ENCODE measurements at regions of chr3 and their contacts with region 1.

Region 1: GRCh38 chr3:17639765-17640164 is 102.7 kb downstream of the TBC1D5 start:
- DNase-seq: peak; percentile 94
- ATAC-seq: peak; percentile 73
- H3K4me3 ChIP-seq: no peak overlapping the region
- H3K27ac ChIP-seq: peak overlapping the region; percentile 69; the same call in 1 of the 2 replicates
- H3K4me1 ChIP-seq: peaks cover 3% of the 10 kb centered on the region
- H3K27me3 ChIP-seq: no peaks in the 10 kb centered on the region
- CTCF ChIP-seq: no peak
- POLR2A ChIP-seq: no peak
- RAD21 ChIP-seq: no peak

Region 2: GRCh38 chr3:17431004-17431403 is 208.8 kb before region 1 on chr3:
- CTCF ChIA-PET with region 1: no interaction called
- POLR2A ChIA-PET with region 1: no interaction called
- dilution Hi-C with region 1: no loop called
- in situ Hi-C with region 1: no loop called
- intact Hi-C with region 1: loop called (anchors 5 kb)
- DNase-seq: peak; percentile 53
- ATAC-seq: peak; percentile 70; the same call in 1 of the 2 replicates
- H3K4me3 ChIP-seq: no peak overlapping the region
- H3K27ac ChIP-seq: no peak overlapping the region
- H3K4me1 ChIP-seq: no peaks in the 10 kb centered on the region; the same call in 1 of the 2 replicates
- H3K27me3 ChIP-seq: no peaks in the 10 kb centered on the region
- CTCF ChIP-seq: peak; percentile 55
- POLR2A ChIP-seq: no peak
- RAD21 ChIP-seq: peak; percentile 64

Region 3: DNA sequence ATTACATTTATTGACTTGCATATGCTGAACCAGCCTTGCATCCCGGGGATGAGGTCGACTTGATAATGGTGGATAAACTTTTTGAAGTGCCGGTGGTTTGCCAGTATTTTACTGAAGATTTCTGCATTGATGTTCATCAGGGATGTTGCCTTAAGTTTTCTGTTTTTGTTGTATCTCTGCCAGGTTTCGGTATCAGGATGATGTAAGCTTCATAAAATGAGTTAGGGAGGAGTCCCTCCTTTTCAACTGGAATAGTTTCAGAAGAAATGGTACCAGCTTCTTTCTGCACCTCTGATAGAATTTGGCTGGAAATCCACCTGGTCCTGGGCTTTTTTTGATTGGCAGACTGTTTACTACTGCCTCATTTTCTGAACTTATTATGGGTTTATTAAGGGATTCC is 148.2 kb before region 1 on chr3:
- CTCF ChIA-PET with region 1: no interaction called
- POLR2A ChIA-PET with region 1: no interaction called
- dilution Hi-C with region 1: no loop called
- in situ Hi-C with region 1: no loop called
- intact Hi-C with region 1: loop called (anchors 5 kb)
- DNase-seq: peak; percentile 86
- ATAC-seq: peak; percentile 65
- H3K4me3 ChIP-seq: no peak overlapping the region
- H3K27ac ChIP-seq: no peak overlapping the region
- H3K4me1 ChIP-seq: no peaks in the 10 kb centered on the region; the same call in 1 of the 2 replicates
- H3K27me3 ChIP-seq: no peaks in the 10 kb centered on the region
- CTCF ChIP-seq: no peak
- POLR2A ChIP-seq: no peak
- RAD21 ChIP-seq: no peak

Measured in IMR-90 (cell line).